Cardiac septum (tissue), 1 donor: ENCODE measurements at regions of chr15 and their contacts with region 1.

Region 1: DNA sequence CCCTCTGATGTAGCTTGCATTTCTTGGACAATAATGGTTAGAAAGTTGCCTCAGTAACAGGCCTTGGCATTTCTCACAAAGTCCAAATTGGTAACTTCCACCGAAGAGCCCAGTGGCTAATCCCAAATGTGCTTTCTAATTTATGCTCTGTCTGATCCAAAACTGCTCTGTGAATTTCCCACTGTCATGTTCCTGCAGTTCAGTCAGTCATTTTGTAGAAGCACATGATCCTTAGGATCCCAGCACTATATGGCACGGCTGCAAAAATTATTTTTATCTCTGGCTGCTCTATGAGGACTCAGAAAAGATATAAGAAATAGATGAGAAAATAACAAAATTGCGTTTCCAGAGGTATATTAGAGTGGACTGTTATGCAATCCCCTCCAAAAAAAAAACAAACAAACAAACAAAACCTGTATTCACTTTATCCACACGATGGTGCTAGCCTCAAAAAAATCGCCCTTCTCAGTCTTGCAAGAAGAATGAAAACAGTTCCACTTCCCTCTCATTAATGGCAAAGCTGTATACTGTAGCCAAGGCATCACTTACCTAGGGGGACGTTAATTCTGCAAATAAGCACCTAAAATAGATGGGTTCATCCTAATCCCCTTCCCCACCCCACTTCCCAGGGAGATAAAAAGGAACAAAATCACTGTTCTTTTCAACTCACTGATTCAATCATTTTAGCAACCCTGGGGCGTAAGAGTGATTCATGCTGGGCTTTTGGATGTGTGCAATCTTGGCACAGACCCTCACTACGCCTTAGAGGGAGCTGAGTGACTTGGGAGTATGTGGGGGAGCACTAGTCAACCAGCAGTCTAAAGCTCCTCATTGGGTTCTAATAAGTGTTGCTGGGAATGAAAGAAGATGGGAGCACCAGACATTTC is 61.3 kb downstream of the TMCO5A start:
- DNase-seq: no peak

Region 2: DNA sequence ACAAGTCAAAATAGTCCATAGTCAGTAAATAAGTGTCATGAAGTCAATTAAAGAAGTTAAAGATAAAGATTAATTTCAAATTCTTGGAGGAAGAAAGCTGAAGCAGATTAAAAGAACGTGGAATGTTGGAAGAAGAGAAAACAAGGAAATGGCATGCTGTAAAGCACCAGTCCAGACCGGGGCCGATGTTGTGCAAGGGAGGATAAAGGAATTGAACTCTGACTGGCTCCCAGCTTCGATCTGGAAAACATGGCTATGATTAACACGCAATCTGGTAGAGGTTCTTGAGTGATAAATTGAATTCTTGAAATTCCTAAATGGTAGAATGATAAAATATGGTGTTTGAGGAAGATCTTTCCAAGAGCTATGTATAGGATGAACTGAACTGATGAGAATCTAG is 1089.8 kb before region 1 on chr15:
- intact Hi-C with region 1: no loop called
- DNase-seq: no peak

Region 3: DNA sequence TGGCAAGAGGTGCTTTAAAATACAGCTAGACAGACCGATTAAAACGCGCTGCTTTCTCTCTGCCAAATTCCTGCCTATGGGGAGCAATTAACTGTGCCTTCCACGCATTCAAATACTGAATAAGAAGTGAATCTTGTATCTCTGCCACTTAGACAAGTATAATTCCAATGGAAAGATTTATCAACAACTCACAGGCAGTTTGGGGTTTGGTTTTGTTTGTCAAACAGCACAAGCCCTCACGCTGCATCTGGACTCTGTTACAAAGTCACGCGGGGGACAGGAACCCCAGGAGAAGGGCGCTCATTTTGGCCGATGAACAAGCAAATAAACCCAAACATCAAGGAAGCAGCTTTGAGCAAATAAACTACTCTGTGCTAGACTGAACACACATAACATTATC is 123.0 kb before region 1 on chr15:
- intact Hi-C with region 1: no loop called
- DNase-seq: no peak

Region 4: DNA sequence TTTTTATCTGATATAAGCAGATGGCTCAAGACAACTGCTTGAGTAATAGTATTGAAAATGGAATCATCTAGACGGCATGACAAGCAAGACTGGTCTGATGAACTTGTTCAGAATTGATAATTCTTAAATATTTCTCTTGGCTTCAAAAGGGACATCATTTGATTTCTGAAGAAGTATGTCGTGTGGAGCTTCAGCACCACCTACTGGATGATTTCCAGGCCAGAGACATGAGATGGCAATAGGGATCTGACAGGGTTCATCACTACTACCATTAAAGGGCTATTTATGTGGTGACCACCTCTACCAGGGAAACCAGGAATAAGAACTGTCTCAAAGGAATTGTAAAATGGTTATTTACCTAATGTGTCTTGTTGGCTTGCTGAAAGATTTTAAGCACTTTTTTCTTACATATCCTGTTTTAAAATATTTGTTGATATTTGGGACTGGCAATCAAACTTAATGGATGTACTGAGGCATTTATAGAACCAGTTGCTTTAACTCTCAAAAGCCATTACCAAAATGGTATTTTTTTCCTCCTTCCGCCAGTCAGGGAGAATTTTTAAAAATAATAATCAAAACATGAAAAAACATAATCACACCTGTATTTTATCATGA is 358.7 kb after region 1 on chr15:
- intact Hi-C with region 1: loop called (anchors 5 kb)
- DNase-seq: no peak

Region 5: GRCh38 chr15:38414357-38414756 is 418.7 kb after region 1 on chr15:
- intact Hi-C with region 1: loop called (anchors 5 kb)
- DNase-seq: peak; percentile 79